ENCODE measurements at regions of chr5 and their contacts with region 1.

Region 1: GRCh38 chr5:68287976-68288706 is 72.6 kb downstream of the PIK3R1 start:
- DNase-seq: no peak
- H3K4me3 ChIP-seq: peak overlapping the region; percentile 60
- CTCF ChIP-seq: no peak

Region 2: GRCh38 chr5:67648201-67648671 is 639.9 kb before region 1 on chr5:
- CTCF ChIA-PET with region 1: no interaction called
- POLR2A ChIA-PET with region 1: no interaction called
- DNase-seq: peak; percentile 58
- H3K4me3 ChIP-seq: 0 out of 2 replicates have a peak overlapping the region, but pooled peaks have one; percentile 13
- CTCF ChIP-seq: no peak

Region 3: DNA sequence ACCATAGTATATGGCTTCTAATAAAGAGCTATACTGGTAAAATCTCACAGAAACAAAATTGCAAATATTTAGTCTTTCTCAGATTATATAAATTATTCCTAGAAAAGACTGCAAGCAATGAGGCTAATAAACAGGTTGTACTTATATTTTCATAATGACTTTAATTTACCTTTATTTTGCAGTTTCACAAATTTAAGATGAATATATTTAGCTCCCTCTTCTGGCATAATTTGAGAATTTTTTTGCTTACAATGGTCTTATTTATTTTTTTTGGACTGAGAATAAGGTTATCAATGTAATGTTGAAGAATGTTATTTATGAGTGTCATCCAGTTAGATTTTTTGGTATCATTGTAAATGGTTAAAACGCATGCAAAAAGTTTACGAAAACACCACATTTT is 15.9 kb before region 1 on chr5:
- CTCF ChIA-PET with region 1: interaction called, 15 read pairs
- POLR2A ChIA-PET with region 1: no interaction called
- DNase-seq: no peak
- H3K4me3 ChIP-seq: no peak overlapping the region
- CTCF ChIP-seq: no peak

Region 4: DNA sequence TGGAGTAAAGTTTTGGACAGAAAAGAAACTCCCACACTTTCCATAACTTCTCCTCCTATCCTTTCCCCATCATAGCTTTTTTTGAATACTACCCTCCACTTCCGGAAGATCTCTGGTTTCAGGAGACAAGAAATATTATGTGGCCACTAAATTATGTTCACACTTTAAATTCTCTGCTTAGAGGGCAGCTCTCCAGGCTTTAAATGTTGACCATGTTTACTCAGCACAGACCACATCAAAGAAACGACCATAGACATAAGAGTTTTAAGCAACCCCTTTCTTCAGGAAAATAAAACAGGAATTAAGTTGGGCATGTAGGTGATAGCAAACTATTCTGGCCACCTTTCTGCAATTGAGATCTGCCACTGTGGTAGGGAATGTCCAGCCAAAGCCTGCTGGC is 25.2 kb after region 1 on chr5:
- CTCF ChIA-PET with region 1: no interaction called
- POLR2A ChIA-PET with region 1: no interaction called
- DNase-seq: no peak
- H3K4me3 ChIP-seq: no peak overlapping the region
- CTCF ChIP-seq: no peak

Region 5: DNA sequence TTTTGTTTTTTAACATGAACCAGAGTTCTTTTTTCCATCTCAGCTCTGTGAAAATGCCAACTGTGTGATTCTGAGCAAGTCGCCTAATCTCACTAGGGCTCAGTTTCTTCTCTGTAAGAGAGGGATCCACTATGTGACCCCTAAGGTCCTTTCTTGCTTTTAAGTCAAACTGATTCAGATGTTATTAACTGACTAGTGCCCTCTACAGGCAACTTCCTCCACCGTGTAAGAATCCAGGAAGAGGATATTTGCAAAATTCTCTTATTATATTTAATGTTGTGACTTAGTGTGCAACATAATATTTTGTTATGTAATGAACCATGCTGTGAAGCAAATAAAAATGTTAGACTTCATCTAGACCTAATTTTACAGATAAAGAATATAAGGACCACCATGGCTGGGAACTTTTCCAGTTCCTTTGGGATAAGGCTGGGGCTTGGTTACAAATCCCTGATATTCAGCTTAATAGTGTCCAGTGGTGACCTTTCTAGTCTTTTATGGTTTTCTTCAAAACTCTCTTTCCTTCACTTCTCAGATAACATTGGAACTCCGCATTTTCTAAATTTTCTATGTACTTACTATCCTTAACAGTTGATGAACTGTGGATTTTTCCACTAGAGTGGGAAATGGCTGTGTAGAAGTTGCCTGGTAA is 172.1 kb after region 1 on chr5:
- CTCF ChIA-PET with region 1: interaction called, 75 read pairs
- POLR2A ChIA-PET with region 1: interaction called, 3 read pairs
- DNase-seq: no peak
- H3K4me3 ChIP-seq: no peak overlapping the region
- CTCF ChIP-seq: peak; percentile 52

Region 6: GRCh38 chr5:68484307-68485068 is 196.3 kb after region 1 on chr5:
- CTCF ChIA-PET with region 1: interaction called, 20 read pairs
- POLR2A ChIA-PET with region 1: no interaction called
- DNase-seq: peak; percentile 91
- H3K4me3 ChIP-seq: no peak overlapping the region
- CTCF ChIP-seq: no peak

Region 7: GRCh38 chr5:68661237-68661636 is 373.1 kb after region 1 on chr5:
- CTCF ChIA-PET with region 1: interaction called, 12 read pairs
- POLR2A ChIA-PET with region 1: no interaction called
- DNase-seq: no peak
- H3K4me3 ChIP-seq: no peak overlapping the region
- CTCF ChIP-seq: peak; percentile 40

Region 8: GRCh38 chr5:69007726-69008368 is 719.7 kb after region 1 on chr5:
- CTCF ChIA-PET with region 1: interaction called, 19 read pairs
- POLR2A ChIA-PET with region 1: no interaction called
- DNase-seq: no peak
- H3K4me3 ChIP-seq: no peak overlapping the region
- CTCF ChIP-seq: peak; percentile 78

Region 9: DNA sequence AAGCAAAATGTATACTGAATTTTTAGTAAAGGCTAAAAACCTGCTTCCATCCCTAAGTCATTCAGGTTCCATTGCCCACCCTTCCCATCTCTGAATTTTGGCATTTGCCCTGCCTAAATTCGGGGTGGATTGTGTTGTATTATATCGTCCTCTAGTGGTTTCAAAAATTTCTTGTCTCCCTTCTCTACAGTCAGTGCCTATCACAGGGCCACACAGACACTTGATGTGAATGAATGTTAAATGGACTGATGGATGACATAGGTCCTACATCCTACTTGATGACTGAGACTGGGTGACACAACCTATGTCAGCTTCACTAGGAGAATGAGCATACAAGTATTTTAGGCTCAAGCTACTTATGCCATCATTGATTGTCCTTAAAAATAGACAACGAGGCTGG is 760.1 kb after region 1 on chr5:
- CTCF ChIA-PET with region 1: interaction called, 24 read pairs
- POLR2A ChIA-PET with region 1: no interaction called
- DNase-seq: no peak
- H3K4me3 ChIP-seq: no peak overlapping the region
- CTCF ChIP-seq: peak; percentile 8

Measured in AG04449 (cell line).